ENCODE measurements at regions of chr3 and their contacts with region 1.

Region 1: GRCh38 chr3:121545574-121546455 is at the start of gene POLQ:
- DNase-seq: peak; percentile 73 to 93 (median 88)
- ATAC-seq: peak; percentile 99
- H3K4me3 ChIP-seq: peak within 1 kb of the TSS; percentile 65 to 72
- H3K4me3 Mint-ChIP-seq: peak within 1 kb of the TSS; percentile 92
- H3K27ac ChIP-seq: peak within 1 kb of the TSS; percentile 53 to 75
- H3K27ac Mint-ChIP-seq: peak within 1 kb of the TSS; percentile 88
- H3K4me1 ChIP-seq: peaks cover 6% of the 10 kb centered on the region
- H3K4me1 Mint-ChIP-seq: peaks cover 12% of the 10 kb centered on the region
- H3K27me3 ChIP-seq: peaks cover 0 to 2% of the 10 kb centered on the region in 2 experiments
- H3K27me3 Mint-ChIP-seq: no peaks in the 10 kb centered on the region
- CTCF ChIP-seq: no peak
- total RNA-seq, gene POLQ: 0.19 to 0.28 TPM

Region 2: DNA sequence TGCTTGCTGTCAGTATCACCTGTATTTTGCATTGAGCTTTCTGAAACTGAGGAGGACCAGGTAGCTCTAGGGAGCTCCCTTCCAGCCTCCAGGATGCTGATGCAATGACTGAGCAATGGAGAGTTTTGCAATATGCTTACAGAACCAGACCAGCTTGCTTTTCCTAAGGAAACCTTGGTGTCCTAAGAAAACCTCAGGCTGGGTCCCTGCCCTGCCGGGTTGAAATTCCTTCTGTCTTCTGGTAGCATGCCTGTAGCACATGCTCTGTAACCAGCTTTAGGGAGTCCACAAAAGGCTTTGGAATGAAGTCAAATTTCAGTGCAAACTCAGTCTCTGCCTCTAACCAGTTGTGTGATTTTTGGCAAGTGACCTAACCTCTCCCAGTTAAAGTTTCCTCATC is 1385.8 kb before region 1 on chr3:
- CTCF ChIA-PET with region 1: no interaction called
- POLR2A ChIA-PET with region 1: no interaction called
- intact Hi-C with region 1: no loop called
- DNase-seq: no peak
- ATAC-seq: no peak
- H3K4me3 ChIP-seq: no peak overlapping the region
- H3K4me3 Mint-ChIP-seq: no peak overlapping the region
- H3K27ac ChIP-seq: no peak overlapping the region
- H3K27ac Mint-ChIP-seq: no peak overlapping the region
- H3K4me1 ChIP-seq: no peaks in the 10 kb centered on the region
- H3K4me1 Mint-ChIP-seq: no peaks in the 10 kb centered on the region
- H3K27me3 ChIP-seq: no peaks in the 10 kb centered on the region
- H3K27me3 Mint-ChIP-seq: no peaks in the 10 kb centered on the region
- CTCF ChIP-seq: no peak

Region 3: GRCh38 chr3:120596116-120596852 is 949.5 kb before region 1 on chr3 and contains the start of gene NDUFB4:
- CTCF ChIA-PET with region 1: no interaction called
- POLR2A ChIA-PET with region 1: no interaction called
- intact Hi-C with region 1: loop called in 1 of 2 experiments (anchors 10 kb)
- DNase-seq: peak; percentile 87 to 99 (median 95)
- ATAC-seq: peak; percentile 92
- H3K4me3 ChIP-seq: peak within 1 kb of the TSS; percentile 77 to 92
- H3K4me3 Mint-ChIP-seq: peak within 1 kb of the TSS; percentile 94
- H3K27ac ChIP-seq: peak within 1 kb of the TSS; percentile 91 to 95
- H3K27ac Mint-ChIP-seq: peak within 1 kb of the TSS; percentile 97
- H3K4me1 ChIP-seq: peaks cover 34% of the 10 kb centered on the region
- H3K4me1 Mint-ChIP-seq: peaks cover 12% of the 10 kb centered on the region
- H3K27me3 ChIP-seq: no peaks in the 10 kb centered on the region
- H3K27me3 Mint-ChIP-seq: no peaks in the 10 kb centered on the region
- CTCF ChIP-seq: no peak
- total RNA-seq, gene NDUFB4: 63.2 to 71.5 TPM

Region 4: GRCh38 chr3:121834696-121835464 is 289.1 kb after region 1 on chr3 and contains the starts of genes EAF2 and IQCB1:
- CTCF ChIA-PET with region 1: no interaction called
- POLR2A ChIA-PET with region 1: interaction called, 3 read pairs
- intact Hi-C with region 1: loop called (anchors 1 to 5 kb)
- DNase-seq: peak; percentile 91 to 98 (median 95)
- ATAC-seq: peak; percentile 97
- H3K4me3 ChIP-seq: peak within 1 kb of the TSS; percentile 74 to 91
- H3K4me3 Mint-ChIP-seq: peak within 1 kb of the TSS; percentile 93
- H3K27ac ChIP-seq: peak within 1 kb of the TSS; percentile 82 to 87
- H3K27ac Mint-ChIP-seq: peak within 1 kb of the TSS; percentile 94
- H3K4me1 ChIP-seq: peaks cover 25% of the 10 kb centered on the region
- H3K4me1 Mint-ChIP-seq: peaks cover 53% of the 10 kb centered on the region
- H3K27me3 ChIP-seq: no peaks in the 10 kb centered on the region
- H3K27me3 Mint-ChIP-seq: no peaks in the 10 kb centered on the region
- CTCF ChIP-seq: no peak
- total RNA-seq, gene EAF2: 3.5 to 3.7 TPM
- total RNA-seq, gene IQCB1: 36.5 to 42.2 TPM

Region 5: DNA sequence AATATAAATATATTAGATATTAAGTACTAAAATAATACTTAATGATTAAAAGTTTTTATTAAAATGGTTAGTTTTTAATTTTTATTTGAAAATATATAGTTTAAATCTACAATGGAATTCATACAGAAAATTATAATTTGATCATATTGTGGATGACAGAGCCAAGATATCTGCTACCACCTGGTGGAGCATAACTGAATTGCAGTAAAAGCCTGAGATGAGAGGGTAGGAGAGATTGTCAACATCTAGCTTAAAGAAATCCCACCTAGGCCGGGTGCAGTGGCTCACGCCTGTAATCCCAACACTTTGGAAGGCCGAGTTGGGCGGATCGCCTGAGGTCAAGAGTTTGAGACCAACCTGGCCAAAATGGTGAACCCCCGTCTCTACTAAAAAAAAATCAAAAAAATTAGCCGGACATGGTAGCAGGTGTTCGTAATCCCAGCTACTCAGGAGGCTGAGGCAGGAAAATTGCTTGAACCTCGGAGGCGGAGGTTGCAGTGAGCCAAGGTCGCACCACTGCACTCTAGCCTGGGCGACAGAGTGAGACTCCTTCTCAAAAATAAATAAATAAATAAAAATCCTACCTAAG is 754.2 kb after region 1 on chr3:
- CTCF ChIA-PET with region 1: interaction called, 14 read pairs
- POLR2A ChIA-PET with region 1: interaction called, 3 read pairs
- intact Hi-C with region 1: loop called (anchors 1 to 2 kb)
- DNase-seq: peak in 5 of 9 experiments; percentile 7 to 74 (median 54)
- ATAC-seq: no peak
- H3K4me3 ChIP-seq: no peak overlapping the region
- H3K4me3 Mint-ChIP-seq: no peak overlapping the region
- H3K27ac ChIP-seq: no peak overlapping the region
- H3K27ac Mint-ChIP-seq: no peak overlapping the region
- H3K4me1 ChIP-seq: peaks cover 5% of the 10 kb centered on the region
- H3K4me1 Mint-ChIP-seq: peaks cover 8% of the 10 kb centered on the region
- H3K27me3 ChIP-seq: no peaks in the 10 kb centered on the region
- H3K27me3 Mint-ChIP-seq: no peaks in the 10 kb centered on the region
- CTCF ChIP-seq: peak; percentile 84

Region 6: DNA sequence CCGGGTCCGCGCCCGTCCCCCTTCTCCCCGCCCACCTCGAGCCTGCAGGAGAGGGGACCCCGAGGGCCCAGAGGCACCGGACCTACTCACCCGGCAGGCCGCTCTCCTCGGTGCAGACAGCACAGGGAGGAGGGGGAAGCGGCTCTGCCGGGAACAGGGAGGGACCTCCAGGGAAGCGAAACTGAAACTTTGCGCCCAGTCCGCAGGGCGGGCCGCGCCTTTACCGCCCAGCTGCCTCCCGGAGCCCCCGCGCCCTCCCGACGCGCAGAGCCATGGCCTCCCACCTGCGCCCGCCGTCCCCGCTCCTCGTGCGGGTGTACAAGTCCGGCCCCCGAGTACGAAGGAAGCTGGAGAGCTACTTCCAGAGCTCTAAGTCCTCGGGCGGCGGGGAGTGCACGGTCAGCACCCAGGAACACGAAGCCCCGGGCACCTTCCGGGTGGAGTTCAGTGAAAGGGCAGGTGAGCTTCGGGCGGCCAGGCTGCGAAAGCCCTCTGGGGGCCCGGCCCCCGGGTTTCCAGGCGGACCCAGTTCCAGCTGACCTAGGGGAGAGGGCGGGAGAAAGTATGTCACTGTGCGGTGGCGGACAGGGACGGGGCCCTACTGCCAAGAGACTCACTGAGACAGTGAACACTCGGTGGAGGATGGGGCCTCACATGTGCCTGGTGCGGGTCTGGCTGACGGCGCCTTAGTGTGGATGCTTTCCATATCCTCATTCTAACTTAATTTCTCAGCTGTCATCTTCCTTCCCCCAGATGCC is 1018.5 kb after region 1 on chr3 and contains the starts of genes DTX3L and PARP9:
- CTCF ChIA-PET with region 1: no interaction called
- POLR2A ChIA-PET with region 1: no interaction called
- intact Hi-C with region 1: loop called (anchors 5 to 10 kb)
- DNase-seq: peak; percentile 39 to 91 (median 80)
- ATAC-seq: peak; percentile 93
- H3K4me3 ChIP-seq: peak within 1 kb of the TSS; percentile 81 to 85
- H3K4me3 Mint-ChIP-seq: peak within 1 kb of the TSS; percentile 92
- H3K27ac ChIP-seq: peak within 1 kb of the TSS; percentile 83 to 88
- H3K27ac Mint-ChIP-seq: peak within 1 kb of the TSS; percentile 96
- H3K4me1 ChIP-seq: peaks cover 39% of the 10 kb centered on the region
- H3K4me1 Mint-ChIP-seq: peaks cover 75% of the 10 kb centered on the region
- H3K27me3 ChIP-seq: no peaks in the 10 kb centered on the region
- H3K27me3 Mint-ChIP-seq: no peaks in the 10 kb centered on the region
- CTCF ChIP-seq: no peak
- total RNA-seq, gene DTX3L: 14.1 to 14.3 TPM
- total RNA-seq, gene PARP9: 12.0 to 12.1 TPM

Region 7: GRCh38 chr3:123201566-123202427 is 1656.0 kb after region 1 on chr3 and contains the start of gene SEC22A:
- CTCF ChIA-PET with region 1: no interaction called
- POLR2A ChIA-PET with region 1: no interaction called
- intact Hi-C with region 1: loop called (anchors 1 to 5 kb)
- DNase-seq: peak; percentile 91 to 99 (median 96)
- ATAC-seq: peak; percentile 96
- H3K4me3 ChIP-seq: peak within 1 kb of the TSS; percentile 82 to 96
- H3K4me3 Mint-ChIP-seq: peak within 1 kb of the TSS; percentile 83
- H3K27ac ChIP-seq: peak within 1 kb of the TSS; percentile 94 to 95
- H3K27ac Mint-ChIP-seq: peak within 1 kb of the TSS; percentile 98
- H3K4me1 ChIP-seq: peaks cover 18% of the 10 kb centered on the region
- H3K4me1 Mint-ChIP-seq: peaks cover 26% of the 10 kb centered on the region
- H3K27me3 ChIP-seq: no peaks in the 10 kb centered on the region
- H3K27me3 Mint-ChIP-seq: no peaks in the 10 kb centered on the region
- CTCF ChIP-seq: no peak
- total RNA-seq, gene SEC22A: 8.6 to 9.1 TPM

Measured in CD8-positive, alpha-beta T cell (primary cell).